CD4-positive, alpha-beta T cell (primary cell): ENCODE measurements at regions of chr1 and their contacts with region 1.

Region 1: DNA sequence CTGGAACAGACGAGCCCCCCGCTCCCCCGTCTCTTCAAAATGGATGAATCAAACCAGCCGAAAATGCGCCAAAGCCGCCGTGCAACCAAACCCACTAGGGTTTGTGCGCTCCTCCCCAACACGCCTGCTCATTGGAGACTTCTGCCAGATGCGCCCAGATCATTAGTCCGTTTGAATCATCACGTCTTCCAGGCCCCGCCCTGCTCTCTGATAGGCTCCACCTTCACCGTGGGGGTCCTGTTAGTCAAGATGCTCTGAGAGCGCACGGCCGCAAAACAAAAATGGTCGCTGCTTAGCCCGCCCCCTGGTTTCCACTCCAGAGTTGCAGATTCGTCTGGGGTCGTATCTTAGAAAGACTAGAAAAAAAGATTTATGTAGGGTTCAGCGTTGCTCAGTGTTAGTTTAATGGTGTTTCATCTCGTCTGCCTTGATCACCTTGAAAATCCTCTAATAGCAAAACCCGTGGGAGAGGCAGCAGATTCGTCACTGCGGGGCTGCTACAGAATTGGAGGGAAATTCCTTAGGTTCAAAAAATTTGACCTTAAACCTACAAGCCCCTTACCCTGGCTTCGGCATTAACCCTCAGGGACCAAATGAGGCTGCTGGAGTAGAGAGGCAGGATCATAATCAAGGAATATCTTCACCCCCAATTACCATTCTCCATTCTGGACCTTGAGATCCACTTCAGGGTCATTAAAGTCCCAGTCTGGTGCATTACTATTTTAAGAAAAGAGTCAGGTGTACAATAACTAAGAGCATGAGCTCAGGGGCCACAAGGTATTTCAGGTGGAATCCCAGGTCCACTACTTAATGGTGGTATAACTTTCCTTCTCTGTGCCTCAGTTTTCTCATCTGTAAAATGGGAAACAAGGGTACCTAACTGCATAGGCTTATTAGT is at the start of gene NUCKS1:
- DNase-seq: peak; percentile 93 to 99 (median 96)
- ATAC-seq: peak; percentile 79
- H3K4me3 ChIP-seq: peak within 1 kb of the TSS; percentile 71
- H3K4me3 Mint-ChIP-seq: peak within 1 kb of the TSS; percentile 99
- H3K27ac ChIP-seq: peak within 1 kb of the TSS; percentile 75 to 80
- H3K27ac Mint-ChIP-seq: peak within 1 kb of the TSS; percentile 93
- H3K4me1 ChIP-seq: peaks cover 8% of the 10 kb centered on the region
- H3K4me1 Mint-ChIP-seq: peaks cover 39% of the 10 kb centered on the region
- H3K27me3 ChIP-seq: no peaks in the 10 kb centered on the region
- H3K27me3 Mint-ChIP-seq: no peaks in the 10 kb centered on the region
- CTCF ChIP-seq: no peak
- total RNA-seq, gene NUCKS1: 80.6 to 84.7 TPM

Region 2: DNA sequence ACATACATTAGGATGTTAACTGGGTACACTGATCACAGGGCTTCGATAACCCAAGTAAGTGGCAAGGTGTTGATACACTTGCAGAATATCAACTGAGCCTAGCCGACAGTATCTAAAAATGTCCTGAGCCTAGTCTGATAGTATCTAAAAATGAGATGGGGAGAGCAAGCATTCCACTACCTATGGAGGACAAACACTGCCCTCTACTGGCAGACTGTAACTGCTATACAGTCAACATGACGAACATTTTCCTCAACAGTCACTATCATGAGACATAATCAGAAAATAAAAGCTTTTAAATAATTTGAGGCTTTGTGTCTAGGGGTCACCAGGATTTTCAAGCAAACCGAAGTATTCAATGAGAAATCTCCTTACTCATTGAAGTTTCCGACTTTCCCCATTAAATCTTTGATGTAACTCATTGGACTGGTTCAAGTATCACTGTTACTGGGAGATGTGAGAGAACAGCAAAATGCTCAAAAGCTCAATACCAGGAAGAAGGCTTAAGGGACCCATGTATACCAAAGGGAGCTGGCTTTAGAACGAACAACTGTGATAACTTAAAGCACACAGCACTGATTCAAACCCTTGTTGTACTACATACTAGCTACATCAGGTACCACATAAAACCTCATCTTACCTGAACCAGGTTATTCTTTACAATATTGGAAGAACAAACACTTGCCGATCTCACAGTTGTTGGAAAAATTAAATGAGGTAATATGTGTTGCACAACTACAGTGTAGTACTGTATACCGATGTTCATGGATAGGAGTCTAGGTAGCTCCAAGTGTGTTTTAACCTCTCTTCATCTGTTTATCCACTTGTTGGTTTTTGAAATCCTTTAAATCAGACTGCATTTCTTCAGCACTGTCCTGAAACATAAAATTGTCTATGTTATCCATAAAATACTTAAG is 39.0 kb before region 1 on chr1:
- CTCF ChIA-PET with region 1: interaction called, 4 read pairs
- POLR2A ChIA-PET with region 1: interaction called, 12 read pairs
- intact Hi-C with region 1: loop called (anchors 2 to 5 kb)
- DNase-seq: peak in 12 of 14 experiments; percentile 16 to 87 (median 47)
- ATAC-seq: peak; percentile 95
- H3K4me3 ChIP-seq: no peak overlapping the region
- H3K4me3 Mint-ChIP-seq: no peak overlapping the region
- H3K27ac ChIP-seq: no peak overlapping the region
- H3K27ac Mint-ChIP-seq: peak overlapping the region; percentile 47
- H3K4me1 ChIP-seq: no peaks in the 10 kb centered on the region
- H3K4me1 Mint-ChIP-seq: peaks cover 40% of the 10 kb centered on the region
- H3K27me3 ChIP-seq: no peaks in the 10 kb centered on the region
- H3K27me3 Mint-ChIP-seq: no peaks in the 10 kb centered on the region
- CTCF ChIP-seq: peak; percentile 91

Region 3: GRCh38 chr1:205729945-205730610 is 20.3 kb before region 1 on chr1:
- CTCF ChIA-PET with region 1: interaction called, 3 read pairs
- POLR2A ChIA-PET with region 1: interaction called, 18 read pairs
- intact Hi-C with region 1: no loop called
- DNase-seq: no peak
- ATAC-seq: no peak
- H3K4me3 ChIP-seq: no peak overlapping the region
- H3K4me3 Mint-ChIP-seq: no peak overlapping the region
- H3K27ac ChIP-seq: no peak overlapping the region
- H3K27ac Mint-ChIP-seq: no peak overlapping the region
- H3K4me1 ChIP-seq: peaks cover 4% of the 10 kb centered on the region
- H3K4me1 Mint-ChIP-seq: peaks cover 44% of the 10 kb centered on the region
- H3K27me3 ChIP-seq: no peaks in the 10 kb centered on the region
- H3K27me3 Mint-ChIP-seq: no peaks in the 10 kb centered on the region
- CTCF ChIP-seq: no peak

Region 4: GRCh38 chr1:205739348-205740160 is 10.8 kb before region 1 on chr1:
- CTCF ChIA-PET with region 1: interaction called, 3 read pairs
- POLR2A ChIA-PET with region 1: interaction called, 13 read pairs
- intact Hi-C with region 1: no loop called
- DNase-seq: no peak
- ATAC-seq: no peak
- H3K4me3 ChIP-seq: no peak overlapping the region
- H3K4me3 Mint-ChIP-seq: no peak overlapping the region
- H3K27ac ChIP-seq: no peak overlapping the region
- H3K27ac Mint-ChIP-seq: no peak overlapping the region
- H3K4me1 ChIP-seq: no peaks in the 10 kb centered on the region
- H3K4me1 Mint-ChIP-seq: peaks cover 56% of the 10 kb centered on the region
- H3K27me3 ChIP-seq: no peaks in the 10 kb centered on the region
- H3K27me3 Mint-ChIP-seq: no peaks in the 10 kb centered on the region
- CTCF ChIP-seq: no peak

Region 5: DNA sequence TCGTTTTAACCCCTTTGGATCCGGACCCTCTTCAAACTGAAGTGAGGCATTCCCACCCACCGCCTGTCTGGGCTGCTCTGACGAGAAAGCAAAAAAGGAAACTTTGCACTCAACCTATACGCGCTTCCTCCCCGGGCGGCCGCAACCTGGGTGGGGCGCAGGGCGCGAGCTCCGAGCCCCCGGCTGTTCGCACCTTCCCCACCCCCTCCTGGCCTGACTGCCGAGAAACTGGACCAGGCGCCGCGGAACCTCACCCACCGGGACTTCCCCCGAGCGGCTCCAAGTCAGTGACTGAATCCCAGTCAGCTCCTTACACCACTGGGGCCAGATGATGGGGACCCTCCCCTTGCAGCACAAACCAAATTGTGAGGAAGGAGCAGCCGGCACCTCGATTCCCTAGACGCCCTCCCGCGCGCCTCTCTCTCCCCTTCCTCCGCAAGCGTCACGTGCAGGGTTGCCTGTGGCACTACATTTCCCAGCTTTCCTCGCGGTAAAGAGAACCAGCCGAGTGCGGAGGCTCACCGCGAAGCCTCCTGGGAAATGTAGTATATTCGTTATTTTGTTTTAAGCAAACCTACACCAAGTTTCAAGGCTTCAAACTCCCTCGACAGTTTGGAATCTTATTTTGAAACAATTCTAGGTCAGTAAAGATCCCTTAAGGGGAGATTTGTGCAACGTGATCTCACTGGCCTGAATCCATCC is 24.8 kb after region 1 on chr1 and contains the start of gene RAB29:
- CTCF ChIA-PET with region 1: interaction called, 10 read pairs
- POLR2A ChIA-PET with region 1: interaction called, 140 read pairs
- intact Hi-C with region 1: loop called (anchors 1 kb)
- DNase-seq: peak; percentile 70 to 95 (median 80)
- ATAC-seq: peak; percentile 89
- H3K4me3 ChIP-seq: peak within 1 kb of the TSS; percentile 78
- H3K4me3 Mint-ChIP-seq: peak within 1 kb of the TSS; percentile 96
- H3K27ac ChIP-seq: peak within 1 kb of the TSS; percentile 87 to 90
- H3K27ac Mint-ChIP-seq: peak within 1 kb of the TSS; percentile 97
- H3K4me1 ChIP-seq: peaks cover 37% of the 10 kb centered on the region
- H3K4me1 Mint-ChIP-seq: peaks cover 61% of the 10 kb centered on the region
- H3K27me3 ChIP-seq: no peaks in the 10 kb centered on the region
- H3K27me3 Mint-ChIP-seq: no peaks in the 10 kb centered on the region
- CTCF ChIP-seq: no peak
- total RNA-seq, gene RAB29: 11.7 to 11.8 TPM

Region 6: DNA sequence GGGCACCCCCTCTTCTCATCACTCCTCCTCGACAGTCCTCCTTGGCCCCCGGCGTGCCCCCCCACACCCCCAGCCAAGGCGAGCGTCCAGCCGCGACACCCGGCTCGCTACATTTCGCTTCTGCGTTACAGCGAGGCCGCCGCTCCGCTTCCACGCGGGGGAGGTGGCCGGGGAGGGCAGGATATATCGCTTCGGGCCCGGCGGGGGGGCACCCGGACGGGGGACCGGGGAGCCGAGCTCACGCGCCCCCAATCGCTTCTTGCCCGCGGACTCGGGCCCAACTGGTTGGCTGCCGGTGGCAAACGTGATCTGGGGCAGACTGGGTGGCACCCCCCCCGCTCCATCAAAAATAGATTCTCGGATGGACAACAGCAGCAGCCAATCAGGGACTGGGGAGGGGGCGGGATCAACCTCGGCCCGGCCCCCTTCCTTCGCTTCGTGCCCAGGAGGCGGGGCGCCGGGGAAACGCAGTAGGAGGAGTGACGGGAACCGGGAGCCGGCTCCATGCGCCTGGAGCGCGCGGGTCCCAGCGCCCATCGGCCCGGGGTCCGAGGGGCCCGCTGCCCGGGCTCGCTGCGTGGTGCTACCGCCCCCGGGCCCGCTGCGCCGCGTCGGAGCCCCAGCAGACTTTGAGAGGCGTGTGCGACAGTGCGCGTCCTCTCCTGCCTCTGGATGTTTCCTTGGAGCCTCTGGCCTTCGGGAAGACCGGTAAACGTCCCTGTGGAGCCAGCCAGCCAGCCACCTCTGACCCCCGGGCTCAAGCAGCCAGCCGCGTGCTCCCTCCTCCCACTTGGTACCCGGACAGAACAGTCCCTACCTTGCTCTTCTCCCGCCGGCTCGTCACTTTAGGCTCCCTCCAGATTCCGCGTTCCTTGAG is 62.7 kb after region 1 on chr1 and contains the start of gene SLC41A1:
- CTCF ChIA-PET with region 1: interaction called, 3 read pairs
- POLR2A ChIA-PET with region 1: interaction called, 6 read pairs
- intact Hi-C with region 1: loop called (anchors 1 to 2 kb)
- DNase-seq: peak; percentile 85 to 97 (median 90)
- ATAC-seq: peak; percentile 95
- H3K4me3 ChIP-seq: peak within 1 kb of the TSS; percentile 97
- H3K4me3 Mint-ChIP-seq: peak within 1 kb of the TSS; percentile 97
- H3K27ac ChIP-seq: peak within 1 kb of the TSS; percentile 19 to 60
- H3K27ac Mint-ChIP-seq: peak within 1 kb of the TSS; percentile 85
- H3K4me1 ChIP-seq: peaks cover 53% of the 10 kb centered on the region
- H3K4me1 Mint-ChIP-seq: peaks cover 60% of the 10 kb centered on the region
- H3K27me3 ChIP-seq: no peaks in the 10 kb centered on the region
- H3K27me3 Mint-ChIP-seq: no peaks in the 10 kb centered on the region
- CTCF ChIP-seq: no peak
- total RNA-seq, gene SLC41A1: 23.8 to 26.4 TPM

Region 7: DNA sequence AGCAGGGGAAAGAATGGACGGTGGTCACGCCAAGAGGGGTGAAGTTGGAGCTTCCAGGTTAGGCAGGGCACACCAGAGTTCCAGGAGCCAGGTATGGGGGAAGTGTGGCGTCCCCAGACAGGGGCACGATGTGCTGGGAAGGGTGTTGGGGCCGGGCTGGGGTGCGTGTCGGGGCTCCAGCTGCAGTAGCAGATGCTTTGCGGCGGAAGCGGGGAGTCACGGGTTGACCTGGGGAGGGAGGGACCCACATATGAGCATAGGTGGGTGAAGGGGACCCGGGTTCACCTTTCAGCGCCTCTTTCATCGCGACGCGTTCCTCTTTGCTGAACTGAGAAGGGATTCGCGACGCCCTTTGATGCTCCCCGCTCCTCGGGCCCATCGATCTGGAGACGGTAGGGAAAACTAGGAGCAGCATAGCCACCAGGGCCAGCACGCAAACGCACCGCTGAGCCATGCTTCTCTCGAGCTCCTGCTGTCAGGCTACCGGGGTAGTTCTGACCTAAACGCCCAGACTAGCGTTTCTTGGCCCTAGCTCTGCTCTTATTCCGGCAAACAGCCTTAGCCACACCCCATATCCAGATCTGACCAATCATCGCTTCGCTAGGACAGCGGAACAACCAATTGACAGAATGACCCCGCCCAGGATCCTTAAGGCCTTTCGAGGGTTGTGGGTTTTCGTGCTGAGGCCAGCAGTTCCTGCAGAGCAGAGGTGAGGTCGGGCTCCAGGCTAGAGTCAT is 99.4 kb after region 1 on chr1 and contains the start of gene PM20D1:
- CTCF ChIA-PET with region 1: no interaction called
- POLR2A ChIA-PET with region 1: interaction called, 15 read pairs
- intact Hi-C with region 1: loop called in 1 of 2 experiments (anchors 5 kb)
- DNase-seq: peak; percentile 52 to 96 (median 77)
- ATAC-seq: peak; percentile 97
- H3K4me3 ChIP-seq: peak within 1 kb of the TSS; percentile 64
- H3K4me3 Mint-ChIP-seq: peak within 1 kb of the TSS; percentile 96
- H3K27ac ChIP-seq: peak within 1 kb of the TSS; percentile 44 to 67
- H3K27ac Mint-ChIP-seq: peak within 1 kb of the TSS; percentile 85
- H3K4me1 ChIP-seq: peaks cover 16% of the 10 kb centered on the region
- H3K4me1 Mint-ChIP-seq: peaks cover 17% of the 10 kb centered on the region
- H3K27me3 ChIP-seq: no peaks in the 10 kb centered on the region
- H3K27me3 Mint-ChIP-seq: no peaks in the 10 kb centered on the region
- CTCF ChIP-seq: no peak
- total RNA-seq, gene PM20D1: 1.2 to 1.4 TPM